Naive thymus-derived CD8-positive, alpha-beta T cell (primary cell): ENCODE measurements at regions of chr1 and their contacts with region 1.

Region 1: GRCh38 chr1:225447650-225448089 is 19.8 kb upstream of the LBR start:
- DNase-seq: peak in 1 of 10 donors; percentile 5
- ATAC-seq: no peak
- H3K4me3 Mint-ChIP-seq: no peak overlapping the region
- H3K27ac Mint-ChIP-seq: peak overlapping the region in 4 of 10 donors; percentile 46 to 91 (median 56)
- H3K4me1 Mint-ChIP-seq: peaks cover 26 to 70% (median 68%) of the 10 kb centered on the region in 4 donors
- H3K27me3 Mint-ChIP-seq: no peaks in the 10 kb centered on the region

Region 2: GRCh38 chr1:225460737-225461562 is 13.3 kb after region 1 on chr1:
- POLR2A ChIA-PET with region 1: interaction called, 230 read pairs
- DNase-seq: peak in 4 of 10 donors; percentile 30 to 62 (median 48)
- ATAC-seq: peak; percentile 67 to 73
- H3K4me3 Mint-ChIP-seq: peak overlapping the region in 6 of 10 donors; percentile 2 to 72 (median 39)
- H3K27ac Mint-ChIP-seq: peak overlapping the region in 8 of 10 donors; percentile 17 to 91 (median 80)
- H3K4me1 Mint-ChIP-seq: peaks cover 19 to 50% (median 44%) of the 10 kb centered on the region in 4 donors
- H3K27me3 Mint-ChIP-seq: no peaks in the 10 kb centered on the region

Region 3: GRCh38 chr1:225474986-225475820 is 27.5 kb after region 1 on chr1:
- POLR2A ChIA-PET with region 1: interaction called, 230 read pairs
- DNase-seq: peak; percentile 45 to 87 (median 74)
- ATAC-seq: peak; percentile 57 to 78
- H3K4me3 Mint-ChIP-seq: peak overlapping the region in 1 of 10 donors; percentile 45
- H3K27ac Mint-ChIP-seq: peak overlapping the region in 5 of 10 donors; percentile 58 to 83 (median 73)
- H3K4me1 Mint-ChIP-seq: peaks cover 26 to 64% (median 56%) of the 10 kb centered on the region in 4 donors
- H3K27me3 Mint-ChIP-seq: no peaks in the 10 kb centered on the region